ENCODE measurements at regions of chr5 and their contacts with region 1.

Region 1: GRCh38 chr5:172325452-172325851 is 41.9 kb upstream of the UBTD2 start:
- DNase-seq: no peak
- H3K4me3 ChIP-seq: no peak overlapping the region
- H3K27ac ChIP-seq: no peak overlapping the region
- H3K27me3 ChIP-seq: no peaks in the 10 kb centered on the region
- CTCF ChIP-seq: no peak

Region 2: GRCh38 chr5:172342918-172343317 is 17.5 kb after region 1 on chr5:
- CTCF ChIA-PET with region 1: no interaction called
- POLR2A ChIA-PET with region 1: interaction called, 13 read pairs
- DNase-seq: no peak
- H3K4me3 ChIP-seq: no peak overlapping the region
- H3K27ac ChIP-seq: no peak overlapping the region
- H3K27me3 ChIP-seq: no peaks in the 10 kb centered on the region
- CTCF ChIP-seq: no peak

Measured in AG04450 (cell line).